WTC11 (cell line): ENCODE measurements at regions of chr5 and their contacts with region 1.

Region 1: GRCh38 chr5:34474573-34475021 is 181.5 kb upstream of the RAI14 start:
- DNase-seq: no peak
- ATAC-seq: peak; percentile 58
- H3K4me3 Mint-ChIP-seq: peak overlapping the region; percentile 45; the same call in 1 of the 2 replicates
- H3K27ac Mint-ChIP-seq: peak overlapping the region; percentile 98
- H3K4me1 Mint-ChIP-seq: peaks cover 25% of the 10 kb centered on the region
- H3K27me3 Mint-ChIP-seq: peaks cover 9% of the 10 kb centered on the region
- CTCF ChIP-seq: peak; percentile 90

Region 2: GRCh38 chr5:34455098-34455497 is 19.5 kb before region 1 on chr5:
- CTCF ChIA-PET with region 1: no interaction called
- POLR2A ChIA-PET with region 1: no interaction called
- DNase-seq: no peak
- ATAC-seq: no peak
- H3K4me3 Mint-ChIP-seq: no peak overlapping the region
- H3K27ac Mint-ChIP-seq: no peak overlapping the region
- H3K4me1 Mint-ChIP-seq: peaks cover 19% of the 10 kb centered on the region
- H3K27me3 Mint-ChIP-seq: no peaks in the 10 kb centered on the region; the same call in 1 of the 2 replicates
- CTCF ChIP-seq: no peak

Region 3: GRCh38 chr5:34570721-34571676 is 96.4 kb after region 1 on chr5:
- CTCF ChIA-PET with region 1: no interaction called
- POLR2A ChIA-PET with region 1: no interaction called
- DNase-seq: no peak
- ATAC-seq: no peak
- H3K4me3 Mint-ChIP-seq: no peak overlapping the region
- H3K27ac Mint-ChIP-seq: no peak overlapping the region
- H3K4me1 Mint-ChIP-seq: peaks cover 6% of the 10 kb centered on the region; the same call in 1 of the 2 replicates
- H3K27me3 Mint-ChIP-seq: peaks cover 3% of the 10 kb centered on the region
- CTCF ChIP-seq: no peak

Region 4: GRCh38 chr5:34648840-34649158 is 174.2 kb after region 1 on chr5:
- CTCF ChIA-PET with region 1: no interaction called
- POLR2A ChIA-PET with region 1: no interaction called
- DNase-seq: no peak
- ATAC-seq: no peak
- H3K4me3 Mint-ChIP-seq: no peak overlapping the region
- H3K27ac Mint-ChIP-seq: no peak overlapping the region
- H3K4me1 Mint-ChIP-seq: peaks cover 9% of the 10 kb centered on the region
- H3K27me3 Mint-ChIP-seq: peaks cover 6% of the 10 kb centered on the region
- CTCF ChIP-seq: no peak

Region 5: GRCh38 chr5:34898258-34898895 is 423.8 kb after region 1 on chr5:
- CTCF ChIA-PET with region 1: interaction called, 20 read pairs
- POLR2A ChIA-PET with region 1: no interaction called
- DNase-seq: peak; percentile 67
- ATAC-seq: peak; percentile 91
- H3K4me3 Mint-ChIP-seq: no peak overlapping the region
- H3K27ac Mint-ChIP-seq: no peak overlapping the region; the same call in 1 of the 2 replicates
- H3K4me1 Mint-ChIP-seq: peaks cover 24% of the 10 kb centered on the region
- H3K27me3 Mint-ChIP-seq: no peaks in the 10 kb centered on the region
- CTCF ChIP-seq: peak; percentile 66

Region 6: GRCh38 chr5:34929150-34929719 is 454.6 kb after region 1 on chr5 and contains the start of gene DNAJC21:
- CTCF ChIA-PET with region 1: interaction called, 11 read pairs
- POLR2A ChIA-PET with region 1: interaction called, 16 read pairs
- DNase-seq: peak; percentile 98
- ATAC-seq: peak; percentile 95
- H3K4me3 Mint-ChIP-seq: peak within 1 kb of the TSS; percentile 97
- H3K27ac Mint-ChIP-seq: peak within 1 kb of the TSS; percentile 98
- H3K4me1 Mint-ChIP-seq: peaks cover 19% of the 10 kb centered on the region
- H3K27me3 Mint-ChIP-seq: no peaks in the 10 kb centered on the region
- CTCF ChIP-seq: no peak
- total RNA-seq, gene DNAJC21: 48.7 to 62.5 TPM (median 49.6 TPM) in 3 replicates